ENCODE measurements at regions of chrX and their contacts with region 1.

Region 1: GRCh38 chrX:154308108-154308946 is 12.7 kb downstream of the TKTL1 start:
- DNase-seq: peak; percentile 66
- H3K4me3 Mint-ChIP-seq: no peak overlapping the region
- H3K27ac Mint-ChIP-seq: peak overlapping the region; percentile 44
- H3K4me1 Mint-ChIP-seq: peaks cover 47% of the 10 kb centered on the region
- H3K27me3 Mint-ChIP-seq: peaks cover 2% of the 10 kb centered on the region

Region 2: DNA sequence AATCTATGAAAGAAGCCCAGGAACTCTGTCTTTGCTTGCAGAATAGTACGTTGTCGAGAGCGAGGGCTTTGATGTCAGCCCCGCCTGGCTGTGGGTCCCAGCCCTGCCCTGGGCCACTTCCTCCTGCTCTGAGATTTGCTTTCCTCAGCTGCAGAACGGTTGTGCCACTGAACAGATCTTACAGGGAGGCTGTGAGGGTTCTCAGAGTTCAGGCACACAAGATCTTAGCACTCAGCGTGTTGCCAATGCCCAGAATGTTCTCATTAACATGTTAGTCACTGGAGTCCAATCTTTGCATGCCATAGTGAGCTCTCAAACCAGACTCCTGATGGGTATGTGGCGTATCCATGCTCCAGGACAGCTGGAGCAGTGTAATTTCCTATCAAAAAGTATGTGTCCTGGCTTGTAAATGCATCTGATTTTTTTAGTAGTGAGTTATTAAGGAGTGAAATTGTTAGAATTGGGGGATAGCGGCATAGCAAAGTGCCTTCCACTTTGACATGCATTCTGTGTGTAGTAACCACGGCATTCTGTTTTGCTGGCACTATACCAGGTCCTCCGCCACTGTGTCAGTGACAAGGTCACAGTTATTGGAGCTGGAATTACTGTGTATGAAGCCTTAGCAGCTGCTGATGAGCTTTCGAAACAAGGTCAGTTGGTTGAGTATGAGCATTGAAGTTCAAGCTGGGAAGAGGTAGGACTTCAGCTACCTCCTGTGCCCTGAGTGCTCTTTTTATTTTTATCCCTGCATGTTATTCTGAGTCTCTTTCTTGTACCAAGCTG is 18.9 kb after region 1 on chrX:
- intact Hi-C with region 1: loop called (anchors 2 kb)
- DNase-seq: peak; percentile 34
- H3K4me3 Mint-ChIP-seq: no peak overlapping the region
- H3K27ac Mint-ChIP-seq: no peak overlapping the region
- H3K4me1 Mint-ChIP-seq: peaks cover 22% of the 10 kb centered on the region
- H3K27me3 Mint-ChIP-seq: no peaks in the 10 kb centered on the region

Region 3: GRCh38 chrX:155148724-155149537 is 840.6 kb after region 1 on chrX:
- intact Hi-C with region 1: no loop called
- DNase-seq: peak; percentile 11
- H3K4me3 Mint-ChIP-seq: no peak overlapping the region
- H3K27ac Mint-ChIP-seq: no peak overlapping the region
- H3K4me1 Mint-ChIP-seq: peaks cover 4% of the 10 kb centered on the region
- H3K27me3 Mint-ChIP-seq: peaks cover 5% of the 10 kb centered on the region

Measured in activated T-helper 1 cell treated with anti-CD3 and anti-CD28 coated beads, Interleukin-12 subunit alpha, Interleukin-12 subunit beta, Interleukin-2, Interleukin-4 antibody, amounts not matched to agents 30 ng/mL and 10 ng/mL and 1 ng/mL, durations not matched to agents 14 hours and 24 hours and 36 hours (primary cell).